Calu3 (cell line): ENCODE measurements at regions of chr1 and their contacts with region 1.

Region 1: GRCh38 chr1:207797229-207797961 is 45.5 kb downstream of the CD46 start:
- DNase-seq: peak; percentile 89
- H3K4me3 Mint-ChIP-seq: no peak overlapping the region
- H3K27ac Mint-ChIP-seq: peak overlapping the region; percentile 48
- H3K4me1 Mint-ChIP-seq: no peaks in the 10 kb centered on the region
- H3K27me3 Mint-ChIP-seq: no peaks in the 10 kb centered on the region
- CTCF ChIP-seq: peak; percentile 73

Region 2: DNA sequence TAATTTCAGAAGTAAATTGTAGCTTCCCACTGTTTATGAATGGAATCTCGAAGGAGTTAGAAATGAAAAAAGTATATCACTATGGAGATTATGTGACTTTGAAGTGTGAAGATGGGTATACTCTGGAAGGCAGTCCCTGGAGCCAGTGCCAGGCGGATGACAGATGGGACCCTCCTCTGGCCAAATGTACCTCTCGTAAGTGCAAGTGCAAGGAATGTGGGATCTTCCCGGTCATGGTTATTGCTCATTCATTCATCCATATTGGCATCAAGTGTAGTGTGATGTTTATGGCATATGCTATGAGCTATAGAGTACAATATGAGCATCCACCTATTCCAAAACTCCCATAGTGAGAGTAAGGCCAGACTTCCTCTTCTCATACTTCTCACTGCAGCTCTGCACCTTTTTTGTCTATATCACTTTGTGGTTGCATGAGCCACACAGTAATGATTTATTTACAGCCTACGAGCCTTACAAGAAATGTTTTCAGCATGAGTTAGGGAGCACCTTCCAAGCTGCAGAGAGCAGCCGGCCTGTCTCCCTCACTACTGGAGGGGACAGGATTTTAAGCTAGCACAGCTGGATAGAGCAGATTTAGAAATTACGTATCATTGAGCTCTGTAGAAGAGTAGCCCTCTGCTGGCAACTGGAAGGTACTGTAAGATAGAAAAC is 177.4 kb before region 1 on chr1:
- CTCF ChIA-PET with region 1: interaction called, 10 read pairs
- intact Hi-C with region 1: no loop called
- DNase-seq: peak; percentile 38
- H3K4me3 Mint-ChIP-seq: no peak overlapping the region
- H3K27ac Mint-ChIP-seq: no peak overlapping the region
- H3K4me1 Mint-ChIP-seq: no peaks in the 10 kb centered on the region
- H3K27me3 Mint-ChIP-seq: peaks cover 31% of the 10 kb centered on the region
- CTCF ChIP-seq: peak; percentile 41

Region 3: GRCh38 chr1:207654320-207654719 is 143.1 kb before region 1 on chr1:
- CTCF ChIA-PET with region 1: interaction called, 7 read pairs
- intact Hi-C with region 1: loop called (anchors 2 kb)
- DNase-seq: no peak
- H3K4me3 Mint-ChIP-seq: no peak overlapping the region
- H3K27ac Mint-ChIP-seq: no peak overlapping the region
- H3K4me1 Mint-ChIP-seq: peaks cover 10% of the 10 kb centered on the region
- H3K27me3 Mint-ChIP-seq: peaks cover 2% of the 10 kb centered on the region
- CTCF ChIP-seq: peak; percentile 31

Region 4: GRCh38 chr1:207698822-207699483 is 98.4 kb before region 1 on chr1:
- CTCF ChIA-PET with region 1: interaction called, 15 read pairs
- intact Hi-C with region 1: loop called (anchors 1 kb)
- DNase-seq: peak; percentile 78
- H3K4me3 Mint-ChIP-seq: no peak overlapping the region
- H3K27ac Mint-ChIP-seq: no peak overlapping the region
- H3K4me1 Mint-ChIP-seq: no peaks in the 10 kb centered on the region
- H3K27me3 Mint-ChIP-seq: no peaks in the 10 kb centered on the region
- CTCF ChIP-seq: peak; percentile 76

Region 5: DNA sequence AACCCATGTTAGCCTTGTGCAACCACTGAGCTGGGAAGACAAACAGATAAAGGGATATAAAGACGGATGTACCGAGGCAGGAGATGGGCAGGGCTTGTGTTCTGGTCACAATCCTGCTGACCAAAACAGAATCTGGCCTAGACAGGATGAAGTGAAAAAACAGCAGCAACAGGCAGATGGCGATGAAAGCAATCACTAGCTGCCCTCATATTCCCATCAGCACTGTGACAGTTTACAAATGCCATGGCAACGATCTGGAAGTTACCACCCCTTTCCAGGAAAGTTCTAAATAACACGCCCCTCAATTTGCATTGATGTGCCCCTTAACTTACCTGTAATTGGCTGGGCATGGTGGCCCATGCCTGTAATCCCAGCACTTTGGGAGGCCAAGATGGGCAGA is 86.1 kb before region 1 on chr1:
- CTCF ChIA-PET with region 1: interaction called, 8 read pairs
- intact Hi-C with region 1: loop called (anchors 1 kb)
- DNase-seq: peak; percentile 32
- H3K4me3 Mint-ChIP-seq: no peak overlapping the region
- H3K27ac Mint-ChIP-seq: no peak overlapping the region
- H3K4me1 Mint-ChIP-seq: no peaks in the 10 kb centered on the region
- H3K27me3 Mint-ChIP-seq: no peaks in the 10 kb centered on the region
- CTCF ChIP-seq: no peak

Region 6: GRCh38 chr1:207751790-207752455 is 45.5 kb before region 1 on chr1 and contains the start of gene CD46:
- CTCF ChIA-PET with region 1: interaction called, 7 read pairs
- intact Hi-C with region 1: loop called (anchors 5 kb)
- DNase-seq: peak; percentile 99
- H3K4me3 Mint-ChIP-seq: peak within 1 kb of the TSS; percentile 94
- H3K27ac Mint-ChIP-seq: peak within 1 kb of the TSS; percentile 91
- H3K4me1 Mint-ChIP-seq: peaks cover 66% of the 10 kb centered on the region
- H3K27me3 Mint-ChIP-seq: no peaks in the 10 kb centered on the region
- CTCF ChIP-seq: no peak
- total RNA-seq, gene CD46: 487 and 635 TPM in 2 replicates